Natural killer cell (primary cell): ENCODE measurements at regions of chr14 and their contacts with region 1.

Region 1: GRCh38 chr14:92135267-92135666 is 13.5 kb downstream of the CPSF2 start:
- DNase-seq: peak in 1 of 2 donors; percentile 50
- ATAC-seq: no peak
- H3K4me3 ChIP-seq: no peak overlapping the region
- H3K4me3 Mint-ChIP-seq: no peak overlapping the region
- H3K27ac ChIP-seq: no peak overlapping the region
- H3K27ac Mint-ChIP-seq: no peak overlapping the region
- H3K4me1 ChIP-seq: no peaks in the 10 kb centered on the region
- H3K4me1 Mint-ChIP-seq: peaks cover 5 to 11% of the 10 kb centered on the region in 2 donors
- H3K27me3 ChIP-seq: no peaks in the 10 kb centered on the region
- H3K27me3 Mint-ChIP-seq: no peaks in the 10 kb centered on the region
- CTCF ChIP-seq: peak; percentile 45

Region 2: GRCh38 chr14:92680781-92681650 is 545.7 kb after region 1 on chr14:
- intact Hi-C with region 1: loop called (anchors 5 kb)
- DNase-seq: peak; percentile 74 to 89
- ATAC-seq: peak; percentile 85 to 87 (median 87)
- H3K4me3 ChIP-seq: no peak overlapping the region
- H3K4me3 Mint-ChIP-seq: peak overlapping the region; percentile 42
- H3K27ac ChIP-seq: peak overlapping the region; percentile 69
- H3K27ac Mint-ChIP-seq: peak overlapping the region; percentile 91
- H3K4me1 ChIP-seq: peaks cover 43% of the 10 kb centered on the region
- H3K4me1 Mint-ChIP-seq: peaks cover 34 to 51% of the 10 kb centered on the region in 2 donors
- H3K27me3 ChIP-seq: no peaks in the 10 kb centered on the region
- H3K27me3 Mint-ChIP-seq: no peaks in the 10 kb centered on the region
- CTCF ChIP-seq: peak; percentile 87

Region 3: DNA sequence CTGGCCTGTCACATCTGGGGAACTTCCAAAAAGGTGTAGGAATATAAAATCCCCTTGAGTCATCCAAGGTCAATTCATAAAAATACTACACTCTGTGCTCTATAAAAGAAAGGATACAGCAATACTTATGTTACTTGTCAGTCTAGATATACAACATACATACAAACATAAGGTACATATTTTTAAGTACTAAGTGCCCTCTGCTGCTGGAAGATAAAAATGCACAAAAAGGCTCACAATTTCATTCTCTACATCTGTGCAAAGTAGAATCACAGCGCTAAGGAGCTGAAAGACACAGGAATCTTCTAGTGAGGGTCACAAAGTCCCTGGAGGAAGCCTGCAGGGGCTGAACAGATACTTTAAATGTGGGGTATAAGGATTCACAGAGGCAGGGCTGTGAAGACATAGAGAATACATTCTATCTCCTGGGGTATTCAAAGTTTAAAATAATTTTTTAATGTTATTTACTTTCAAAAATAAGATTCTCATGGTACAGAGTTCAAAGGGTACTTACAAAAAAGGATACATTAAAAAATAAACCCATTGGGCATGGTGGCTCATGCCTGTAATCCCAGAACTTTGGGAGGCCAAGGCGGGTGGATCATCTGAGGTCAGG is 648.7 kb after region 1 on chr14:
- intact Hi-C with region 1: loop called (anchors 2 kb)
- DNase-seq: peak in 1 of 2 donors; percentile 67
- ATAC-seq: peak; percentile 77 to 87 (median 82)
- H3K4me3 ChIP-seq: no peak overlapping the region
- H3K4me3 Mint-ChIP-seq: no peak overlapping the region
- H3K27ac ChIP-seq: no peak overlapping the region
- H3K27ac Mint-ChIP-seq: no peak overlapping the region
- H3K4me1 ChIP-seq: no peaks in the 10 kb centered on the region
- H3K4me1 Mint-ChIP-seq: no peaks in the 10 kb centered on the region
- H3K27me3 ChIP-seq: no peaks in the 10 kb centered on the region
- H3K27me3 Mint-ChIP-seq: no peaks in the 10 kb centered on the region
- CTCF ChIP-seq: peak; percentile 58